GM18951 (cell line): ENCODE measurements at regions of chr12 and their contacts with region 1.

Region 1: DNA sequence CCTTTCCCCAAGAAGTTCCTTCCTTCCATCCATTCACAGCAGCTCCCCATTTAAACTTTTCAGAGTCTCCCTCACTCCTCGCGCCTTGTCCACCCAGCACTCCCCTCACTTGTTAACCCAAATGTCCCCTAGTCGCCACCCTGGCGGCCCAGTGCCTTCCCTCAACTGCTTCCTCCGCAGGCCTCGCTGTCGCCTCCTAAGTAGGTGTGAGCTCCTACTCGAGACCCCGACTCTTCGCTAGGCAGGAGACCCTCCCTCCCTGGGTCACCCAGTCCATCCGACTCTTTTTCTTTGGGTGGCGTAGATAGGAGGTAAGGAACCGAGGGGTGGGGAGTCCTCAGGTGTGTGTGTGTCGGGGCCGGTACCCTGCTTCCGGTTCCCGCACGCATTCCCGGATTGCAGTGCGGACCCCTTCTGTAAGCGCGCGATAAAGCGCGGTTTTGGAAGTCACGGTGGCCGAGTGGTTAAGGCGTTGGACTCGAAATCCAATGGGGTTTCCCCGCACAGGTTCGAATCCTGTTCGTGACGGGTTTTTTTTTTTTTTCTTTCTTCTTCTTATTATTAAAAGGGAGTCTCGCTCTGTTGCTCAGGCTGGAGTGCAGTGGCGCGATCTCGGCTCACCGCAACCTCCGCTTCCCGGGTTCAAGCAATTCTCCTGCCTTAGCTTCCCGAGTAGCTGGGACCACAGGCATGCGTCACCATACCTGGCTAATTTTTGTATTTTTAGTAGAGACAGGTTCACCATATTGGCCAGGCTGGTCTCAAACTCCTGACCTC is 823 bp upstream of the SMARCC2 start:
- POLR2A ChIP-seq: peak; percentile 20

Region 2: DNA sequence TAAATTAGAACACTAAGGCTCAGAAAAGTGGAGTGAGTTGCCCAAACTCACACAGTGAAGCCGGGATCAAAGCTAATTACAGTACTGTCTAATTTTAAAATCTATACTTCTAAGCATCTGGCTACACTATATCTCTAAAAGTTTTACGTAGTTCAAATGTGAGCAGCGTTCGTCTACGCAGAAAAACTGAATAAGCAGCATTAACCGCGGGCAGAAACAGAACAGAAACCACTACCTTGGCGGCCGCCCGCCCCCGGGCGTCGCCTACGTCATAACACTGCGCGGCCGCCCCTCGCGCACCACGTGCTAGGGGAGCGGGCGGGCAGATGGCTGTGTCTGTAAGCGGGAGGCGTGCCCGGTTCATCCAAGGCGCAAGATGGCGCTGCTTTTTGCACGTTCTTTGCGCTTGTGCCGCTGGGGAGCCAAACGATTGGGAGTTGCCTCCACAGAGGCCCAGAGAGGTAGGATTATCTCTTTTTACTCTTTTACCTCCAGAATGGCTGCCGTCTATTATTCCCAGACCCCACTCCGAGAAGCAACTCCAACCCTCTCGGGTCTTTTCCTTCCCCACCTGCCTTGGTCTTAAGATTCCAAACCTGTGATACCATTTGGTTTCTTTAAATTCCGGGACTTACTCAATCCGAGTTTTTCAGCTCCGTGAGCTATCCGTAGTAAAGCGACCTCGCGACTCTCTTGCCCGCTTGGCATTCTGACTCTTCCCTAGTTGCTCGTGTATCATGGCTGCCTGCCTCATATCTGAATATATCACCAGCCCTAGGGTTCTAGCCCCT is 278.3 kb after region 1 on chr12 and contains the start of gene SPRYD4:
- in situ Hi-C with region 1: loop called (anchors 10 kb)
- POLR2A ChIP-seq: peak; percentile 95